BJ (cell line): ENCODE measurements at regions of chr20 and their contacts with region 1.

Region 1: GRCh38 chr20:5191829-5192569 is 65.2 kb downstream of the CDS2 start:
- DNase-seq: peak; percentile 28
- H3K4me3 ChIP-seq: no peak overlapping the region
- H3K27me3 ChIP-seq: no peaks in the 10 kb centered on the region
- CTCF ChIP-seq: peak; percentile 74

Region 2: DNA sequence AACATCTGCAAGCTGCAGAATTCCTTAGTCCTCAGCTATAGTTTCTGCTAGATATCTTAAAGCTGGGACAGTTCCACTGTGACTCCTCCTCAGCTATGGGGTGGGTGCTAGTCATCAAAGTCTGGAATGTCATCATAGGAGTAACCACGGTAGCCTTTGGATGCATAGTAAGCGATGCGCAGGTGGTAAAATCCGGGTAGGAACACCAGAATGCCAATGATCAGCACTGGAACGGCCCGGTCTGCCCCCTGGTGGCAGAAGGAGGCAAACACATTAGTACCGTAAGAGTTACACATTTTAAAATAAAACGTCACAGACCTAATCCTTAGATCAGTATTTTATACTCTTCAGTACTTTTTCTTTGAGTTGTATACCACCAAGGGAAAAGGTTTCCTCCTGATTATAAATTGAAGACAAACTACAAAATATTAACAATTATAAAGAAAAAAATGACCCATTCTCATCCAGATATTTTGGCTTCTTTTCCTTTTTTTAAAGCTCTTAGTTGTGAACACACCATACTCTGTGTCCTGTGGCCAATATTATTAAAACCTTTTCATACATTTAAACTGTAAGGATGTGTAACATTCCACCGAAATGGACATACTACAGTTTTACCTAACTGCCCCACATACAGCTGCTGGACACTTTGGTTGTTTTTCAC is 91.2 kb before region 1 on chr20:
- CTCF ChIA-PET with region 1: interaction called, 14 read pairs
- POLR2A ChIA-PET with region 1: no interaction called
- DNase-seq: no peak
- H3K4me3 ChIP-seq: no peak overlapping the region
- H3K27me3 ChIP-seq: no peaks in the 10 kb centered on the region
- CTCF ChIP-seq: peak; percentile 83

Region 3: DNA sequence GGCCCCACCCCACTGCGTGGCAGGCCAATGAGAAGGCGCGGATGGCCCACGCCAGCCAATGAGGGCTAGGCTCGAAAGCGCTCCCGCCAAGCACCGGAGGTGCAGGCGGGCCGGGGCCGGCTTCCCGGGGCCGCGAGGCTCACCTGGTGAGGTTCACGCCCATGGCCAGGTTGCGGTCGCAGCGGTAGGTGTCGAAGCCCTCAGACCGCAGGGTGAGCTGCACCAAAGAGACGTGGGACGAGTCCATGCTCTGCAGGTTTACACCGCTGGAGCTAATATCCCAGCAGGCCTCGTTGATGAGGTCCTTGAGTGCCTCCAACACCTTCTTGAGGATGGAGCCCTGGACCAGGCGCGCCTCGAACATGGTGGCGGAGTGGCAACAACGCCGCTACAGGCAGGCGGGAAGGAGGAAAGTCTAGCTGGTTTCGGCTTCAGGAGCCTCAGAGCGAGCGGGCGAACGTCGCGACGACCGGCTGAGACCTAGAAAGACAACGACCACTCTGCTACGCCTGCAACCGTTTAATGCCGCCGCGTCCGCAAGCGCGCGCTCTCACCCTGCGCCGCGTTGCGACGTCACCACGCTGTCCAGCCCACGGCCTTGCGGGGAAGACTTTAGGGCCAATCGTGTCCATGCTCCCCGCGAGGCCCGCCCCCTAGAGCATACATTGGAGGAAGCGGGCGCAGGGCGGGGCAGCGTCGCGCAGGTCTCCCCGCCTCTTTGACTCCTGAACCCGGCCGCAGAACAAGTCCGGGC is 72.4 kb before region 1 on chr20 and contains the start of gene PCNA:
- CTCF ChIA-PET with region 1: interaction called, 141 read pairs
- POLR2A ChIA-PET with region 1: no interaction called
- DNase-seq: peak; percentile 88
- H3K4me3 ChIP-seq: peak within 1 kb of the TSS; percentile 100
- H3K27me3 ChIP-seq: no peaks in the 10 kb centered on the region
- CTCF ChIP-seq: no peak
- polyA plus RNA-seq, gene PCNA: 78.2 and 94.6 TPM in 2 replicates

Region 4: DNA sequence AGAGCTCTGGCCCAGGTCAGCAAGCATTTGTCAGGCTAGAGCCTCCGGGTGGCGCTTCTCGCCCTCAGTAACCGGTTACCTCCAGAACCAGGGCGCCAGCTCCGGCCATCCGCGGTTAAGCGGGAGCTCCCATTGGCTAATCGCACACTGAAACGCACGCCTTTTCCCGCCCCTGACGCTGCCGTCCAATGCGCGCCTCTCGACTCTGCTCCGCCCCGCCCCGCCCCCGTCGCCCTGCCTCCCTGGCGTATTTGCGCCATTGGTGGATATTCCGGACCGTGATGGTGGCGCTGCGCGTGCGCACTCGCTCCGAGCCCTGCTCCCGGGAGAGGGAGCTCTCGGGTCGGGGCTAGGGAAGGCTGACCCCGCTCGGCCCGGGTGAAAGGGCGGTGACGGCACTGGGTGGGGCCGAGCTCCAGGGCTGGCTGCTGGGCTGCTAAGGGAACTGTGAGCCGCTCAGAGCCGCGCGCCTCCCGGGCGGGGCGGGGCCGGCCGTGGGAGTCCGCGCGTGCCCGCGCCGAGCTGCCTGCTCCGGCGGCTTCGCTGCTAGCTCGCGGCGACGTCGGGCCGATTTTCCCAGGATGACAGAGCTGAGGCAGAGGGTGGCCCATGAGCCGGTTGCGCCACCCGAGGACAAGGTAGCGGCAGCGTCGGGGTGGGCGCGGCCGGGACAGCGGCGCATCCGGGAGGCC is 65.3 kb before region 1 on chr20 and contains the start of gene CDS2:
- CTCF ChIA-PET with region 1: interaction called, 141 read pairs
- POLR2A ChIA-PET with region 1: interaction called, 4 read pairs
- DNase-seq: peak; percentile 92
- H3K4me3 ChIP-seq: peak within 1 kb of the TSS; percentile 90
- H3K27me3 ChIP-seq: no peaks in the 10 kb centered on the region
- CTCF ChIP-seq: peak; percentile 72
- polyA plus RNA-seq, gene CDS2: 25.2 and 46.3 TPM in 2 replicates

Region 5: GRCh38 chr20:5168651-5169396 is 23.2 kb before region 1 on chr20:
- CTCF ChIA-PET with region 1: interaction called, 19 read pairs
- POLR2A ChIA-PET with region 1: no interaction called
- DNase-seq: no peak
- H3K4me3 ChIP-seq: no peak overlapping the region
- H3K27me3 ChIP-seq: no peaks in the 10 kb centered on the region
- CTCF ChIP-seq: no peak

Region 6: DNA sequence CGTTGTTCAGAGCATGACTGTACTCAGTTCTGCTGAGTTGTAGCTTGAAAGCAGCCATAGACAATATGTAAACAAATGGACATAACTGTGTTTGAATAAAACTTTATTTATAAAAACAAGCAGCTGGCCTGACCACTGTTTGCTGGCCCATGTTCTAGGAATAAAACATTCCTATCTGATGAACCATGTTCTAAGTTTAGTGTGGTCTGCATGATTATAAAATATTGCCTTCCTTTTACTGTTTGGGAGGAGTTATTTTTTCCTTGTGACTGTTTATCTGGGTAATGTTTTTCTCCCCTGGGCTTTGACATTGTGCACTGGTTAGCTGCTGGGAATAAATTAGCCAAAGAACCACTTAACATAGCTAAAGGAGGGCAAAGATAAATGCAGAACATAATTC is 10.0 kb before region 1 on chr20:
- CTCF ChIA-PET with region 1: interaction called, 17 read pairs
- POLR2A ChIA-PET with region 1: interaction called, 7 read pairs
- DNase-seq: no peak
- H3K4me3 ChIP-seq: no peak overlapping the region
- H3K27me3 ChIP-seq: no peaks in the 10 kb centered on the region
- CTCF ChIP-seq: no peak

Region 7: GRCh38 chr20:5205348-5206210 is 13.6 kb after region 1 on chr20:
- CTCF ChIA-PET with region 1: interaction called, 24 read pairs
- POLR2A ChIA-PET with region 1: no interaction called
- DNase-seq: peak; percentile 25
- H3K4me3 ChIP-seq: no peak overlapping the region
- H3K27me3 ChIP-seq: no peaks in the 10 kb centered on the region
- CTCF ChIP-seq: peak; percentile 95